Spleen (tissue), 13 donors: ENCODE measurements at regions of chr18 and their contacts with region 1.

Region 1: GRCh38 chr18:22169007-22169864 is at the start of gene GATA6:
- DNase-seq: peak; percentile 84
- H3K4me3 ChIP-seq: peak within 1 kb of the TSS; percentile 44 to 86 (median 64)
- H3K27ac ChIP-seq: peak within 1 kb of the TSS; percentile 77 to 93 (median 90)
- H3K4me1 ChIP-seq: peaks cover 3 to 65% (median 37%) of the 10 kb centered on the region in 6 donors
- H3K27me3 ChIP-seq: peaks cover 10 to 100% (median 83%) of the 10 kb centered on the region in 7 donors
- CTCF ChIP-seq: peak in 6 of 11 experiments; percentile 14 to 29 (median 24)
- POLR2A ChIP-seq: peak in 1 of 3 donors; percentile 85
- total RNA-seq, gene GATA6: 27.4 to 65.3 (median 42.3) TPM

Region 2: GRCh38 chr18:21391074-21391673 is 778.1 kb before region 1 on chr18:
- intact Hi-C with region 1: no loop called
- DNase-seq: no peak
- H3K4me3 ChIP-seq: no peak overlapping the region
- H3K27ac ChIP-seq: no peak overlapping the region
- H3K4me1 ChIP-seq: no peaks in the 10 kb centered on the region
- H3K27me3 ChIP-seq: no peaks in the 10 kb centered on the region
- CTCF ChIP-seq: no peak
- POLR2A ChIP-seq: no peak

Region 3: DNA sequence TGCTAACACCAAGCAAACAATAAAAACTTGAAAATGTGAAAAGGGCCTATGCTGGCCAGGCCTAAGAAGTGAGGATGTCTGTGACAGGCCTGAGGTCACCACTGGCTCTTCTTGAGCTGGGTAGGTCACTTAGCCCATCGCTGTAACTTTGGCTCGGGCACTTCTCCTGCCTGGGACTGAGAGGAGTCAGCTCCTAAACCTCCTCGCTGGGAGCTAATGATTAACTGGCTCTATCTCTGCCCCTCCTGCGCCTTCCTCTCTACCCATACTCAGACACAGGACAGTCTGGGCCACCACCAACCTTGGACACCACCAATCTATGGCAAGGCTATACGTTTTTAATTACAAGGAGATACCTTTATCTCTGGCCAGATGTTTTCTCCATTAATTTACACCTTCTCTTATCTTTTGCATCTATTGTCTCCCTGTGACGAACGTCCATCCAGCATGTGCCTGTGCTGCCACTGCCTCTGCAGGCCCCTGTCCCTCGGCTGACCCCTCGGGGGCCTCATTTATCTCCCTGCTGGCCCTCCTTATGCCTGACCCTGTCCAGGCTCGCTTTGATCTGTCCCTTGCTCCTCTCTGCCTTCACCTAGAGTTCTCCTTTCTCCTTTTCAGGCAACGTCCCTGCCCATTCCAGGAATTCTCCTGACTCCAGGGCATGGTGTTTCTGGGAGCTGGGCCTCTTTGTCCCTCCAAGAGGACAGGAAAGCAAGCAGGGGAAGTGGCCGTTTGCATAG is 148.9 kb before region 1 on chr18:
- intact Hi-C with region 1: loop called (anchors 10 kb)
- DNase-seq: no peak
- H3K4me3 ChIP-seq: no peak overlapping the region
- H3K27ac ChIP-seq: peak overlapping the region in 5 of 8 donors; percentile 11 to 54 (median 29)
- H3K4me1 ChIP-seq: peaks cover 0 to 9% (median 0%) of the 10 kb centered on the region in 6 donors
- H3K27me3 ChIP-seq: no peaks in the 10 kb centered on the region
- CTCF ChIP-seq: no peak
- POLR2A ChIP-seq: no peak

Region 4: DNA sequence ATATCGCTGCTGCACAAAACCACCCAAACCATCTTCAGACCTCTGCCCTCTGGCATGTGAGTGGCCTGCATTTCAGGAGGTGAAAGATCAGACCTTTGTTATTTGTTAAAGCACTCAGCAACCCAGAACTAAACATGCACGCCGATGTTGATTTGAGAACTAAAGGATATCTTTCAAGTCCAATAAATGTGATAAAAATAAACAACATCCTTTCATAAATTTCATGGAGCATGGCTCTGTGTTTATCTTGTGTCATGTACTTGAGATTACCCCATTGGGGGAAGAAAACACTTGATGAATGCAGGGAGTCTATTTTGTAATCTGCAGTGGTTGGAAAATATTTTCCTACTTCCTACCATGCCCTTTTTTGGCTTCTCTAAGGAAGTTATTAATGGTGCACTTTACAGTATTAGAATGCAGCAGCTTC is 70.7 kb before region 1 on chr18:
- intact Hi-C with region 1: no loop called
- DNase-seq: no peak
- H3K4me3 ChIP-seq: no peak overlapping the region
- H3K27ac ChIP-seq: peak overlapping the region in 5 of 8 donors; percentile 6 to 55 (median 39)
- H3K4me1 ChIP-seq: peaks cover 8 to 38% (median 25%) of the 10 kb centered on the region in 6 donors
- H3K27me3 ChIP-seq: peaks cover 0 to 12% (median 0%) of the 10 kb centered on the region in 7 donors
- CTCF ChIP-seq: no peak
- POLR2A ChIP-seq: no peak

Region 5: DNA sequence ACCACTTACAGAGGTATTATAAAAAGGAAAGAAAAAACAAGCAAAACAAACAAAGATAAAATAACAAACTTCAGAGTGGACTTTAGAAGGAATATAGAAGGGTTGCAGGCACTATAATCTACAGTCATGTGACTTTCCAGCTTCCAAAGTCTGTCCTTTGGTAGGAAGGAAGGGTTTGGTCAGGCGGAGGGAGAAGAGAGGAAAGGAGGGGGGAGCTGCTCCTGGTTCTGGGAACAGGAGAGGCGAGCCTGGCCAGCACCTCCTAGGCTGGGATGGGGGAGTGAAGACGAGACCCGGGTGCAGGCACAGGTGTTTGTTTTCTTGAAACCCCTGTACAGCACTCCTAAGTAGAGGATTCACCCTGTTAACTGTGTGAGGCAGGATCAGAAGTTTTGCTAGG is 53.7 kb before region 1 on chr18:
- intact Hi-C with region 1: loop called (anchors 5 kb)
- DNase-seq: no peak
- H3K4me3 ChIP-seq: no peak overlapping the region
- H3K27ac ChIP-seq: peak overlapping the region; percentile 7 to 78 (median 56)
- H3K4me1 ChIP-seq: peaks cover 0 to 35% (median 2%) of the 10 kb centered on the region in 6 donors
- H3K27me3 ChIP-seq: no peaks in the 10 kb centered on the region
- CTCF ChIP-seq: no peak
- POLR2A ChIP-seq: no peak